ENCODE measurements at regions of chr4 and their contacts with region 1.

Region 1: DNA sequence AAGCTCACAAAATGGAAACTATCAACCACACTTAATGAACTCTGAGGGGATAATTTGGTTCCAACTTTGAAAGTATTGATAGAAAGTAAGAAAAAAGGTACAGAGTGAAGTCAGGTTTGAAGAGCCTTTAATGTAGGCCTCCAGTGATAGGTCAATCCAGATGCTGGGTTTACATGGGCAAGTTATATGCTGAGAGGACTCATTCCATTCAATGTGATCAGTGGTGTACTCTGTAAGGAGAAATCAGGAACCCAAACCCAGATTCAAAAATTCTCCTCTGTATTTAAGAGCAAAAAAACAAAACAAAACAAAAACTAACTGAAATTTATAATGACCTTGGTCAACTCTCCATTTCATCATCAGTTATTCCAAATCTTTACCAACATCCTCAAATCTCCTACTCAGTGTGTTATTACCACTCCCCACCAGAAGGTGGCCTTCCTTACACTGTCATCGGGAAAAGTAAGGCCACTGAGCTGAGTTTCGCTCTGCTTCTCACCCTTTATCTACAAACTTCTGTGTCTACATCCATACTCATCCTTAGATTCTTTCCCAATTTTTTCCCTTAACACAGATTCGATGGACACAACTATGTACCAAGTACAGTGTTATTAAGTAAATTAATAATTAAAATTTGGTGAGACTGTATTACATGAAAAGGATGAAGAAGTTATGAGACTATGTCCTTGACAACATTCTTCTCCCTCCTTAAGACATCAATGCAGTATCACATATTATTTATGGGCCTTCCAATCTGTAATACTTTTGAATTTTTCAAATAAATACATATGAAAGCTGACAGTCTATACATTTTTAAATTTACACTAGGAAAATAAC is 88.3 kb downstream of the ZAR1 start:
- DNase-seq: no peak
- ATAC-seq: peak; percentile 83
- H3K4me3 Mint-ChIP-seq: no peak overlapping the region
- H3K27ac Mint-ChIP-seq: no peak overlapping the region
- H3K4me1 Mint-ChIP-seq: no peaks in the 10 kb centered on the region
- H3K27me3 Mint-ChIP-seq: no peaks in the 10 kb centered on the region
- CTCF ChIP-seq: peak; percentile 34

Region 2: GRCh38 chr4:48557478-48557877 is 20.9 kb before region 1 on chr4:
- CTCF ChIA-PET with region 1: no interaction called
- POLR2A ChIA-PET with region 1: no interaction called
- intact Hi-C with region 1: no loop called
- DNase-seq: no peak
- ATAC-seq: no peak
- H3K4me3 Mint-ChIP-seq: no peak overlapping the region
- H3K27ac Mint-ChIP-seq: no peak overlapping the region
- H3K4me1 Mint-ChIP-seq: no peaks in the 10 kb centered on the region
- H3K27me3 Mint-ChIP-seq: no peaks in the 10 kb centered on the region
- CTCF ChIP-seq: no peak

Region 3: DNA sequence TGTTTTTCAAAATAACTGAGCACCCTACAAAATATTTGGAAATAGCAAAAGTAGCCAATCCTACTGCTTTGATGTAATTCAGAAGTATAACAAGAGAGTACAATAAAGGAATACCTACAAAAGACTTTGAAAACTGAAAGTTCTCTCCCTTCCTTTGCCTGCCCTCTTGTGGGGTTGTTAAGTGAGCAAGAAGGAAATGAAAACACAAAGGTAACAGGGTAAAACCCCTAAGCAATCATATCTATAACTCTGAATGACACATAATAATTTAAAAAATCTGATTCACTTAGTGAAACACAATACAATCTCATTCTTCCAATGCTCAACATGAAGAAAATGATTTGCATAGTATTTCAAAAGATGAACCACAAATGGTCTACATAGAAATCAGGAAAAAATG is 103.5 kb after region 1 on chr4:
- CTCF ChIA-PET with region 1: interaction called, 21 read pairs
- POLR2A ChIA-PET with region 1: no interaction called
- intact Hi-C with region 1: loop called (anchors 1 kb)
- DNase-seq: no peak
- ATAC-seq: peak; percentile 84
- H3K4me3 Mint-ChIP-seq: peak overlapping the region; percentile 24
- H3K27ac Mint-ChIP-seq: peak overlapping the region; percentile 78
- H3K4me1 Mint-ChIP-seq: peaks cover 44% of the 10 kb centered on the region
- H3K27me3 Mint-ChIP-seq: no peaks in the 10 kb centered on the region
- CTCF ChIP-seq: no peak

Measured in activated B cell treated with CpG ODN at 0.5 μM for 24 hours (primary cell).